PC-3 (cell line): ENCODE measurements at regions of chr4 and their contacts with region 1.

Region 1: GRCh38 chr4:126533146-126533805 is 1099.5 kb upstream of the INTU start:
- DNase-seq: no peak
- ATAC-seq: peak; percentile 37
- H3K4me3 ChIP-seq: no peak overlapping the region
- H3K27ac ChIP-seq: no peak overlapping the region; the same call in 1 of the 2 replicates
- H3K4me1 ChIP-seq: peaks cover 8% of the 10 kb centered on the region
- H3K27me3 ChIP-seq: no peaks in the 10 kb centered on the region
- CTCF ChIP-seq: no peak

Region 2: DNA sequence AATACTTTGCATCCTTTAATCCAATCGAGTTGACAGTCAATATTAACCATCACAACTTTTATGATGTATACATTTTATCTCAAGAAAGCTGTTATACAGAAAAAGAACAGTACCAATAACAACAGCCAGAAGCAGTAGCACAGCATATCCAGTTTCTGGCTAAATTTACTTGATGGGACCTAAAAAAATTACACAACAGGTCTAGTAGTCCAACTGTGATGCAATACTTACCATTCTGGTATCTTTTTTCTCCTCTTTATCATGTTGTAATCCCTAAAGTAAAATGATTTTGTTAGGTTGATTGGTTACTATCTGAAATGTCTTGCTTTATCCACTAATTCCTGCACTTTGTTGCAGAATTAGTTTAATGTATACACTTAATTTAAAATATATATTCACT is 67.9 kb before region 1 on chr4:
- CTCF ChIA-PET with region 1: no interaction called
- POLR2A ChIA-PET with region 1: no interaction called
- intact Hi-C with region 1: loop called (anchors 10 kb)
- DNase-seq: no peak
- ATAC-seq: no peak
- H3K4me3 ChIP-seq: no peak overlapping the region
- H3K27ac ChIP-seq: no peak overlapping the region
- H3K4me1 ChIP-seq: no peaks in the 10 kb centered on the region
- H3K27me3 ChIP-seq: no peaks in the 10 kb centered on the region
- CTCF ChIP-seq: no peak

Region 3: GRCh38 chr4:126564283-126564854 is 31.1 kb after region 1 on chr4:
- CTCF ChIA-PET with region 1: no interaction called
- POLR2A ChIA-PET with region 1: no interaction called
- intact Hi-C with region 1: loop called (anchors 2 kb)
- DNase-seq: peak; percentile 39
- ATAC-seq: peak; percentile 92
- H3K4me3 ChIP-seq: no peak overlapping the region
- H3K27ac ChIP-seq: no peak overlapping the region
- H3K4me1 ChIP-seq: peaks cover 3% of the 10 kb centered on the region; the same call in 1 of the 2 replicates
- H3K27me3 ChIP-seq: no peaks in the 10 kb centered on the region
- CTCF ChIP-seq: no peak